Heart left ventricle (tissue), 16 donors: ENCODE measurements at regions of chr17 and their contacts with region 1.

Region 1: GRCh38 chr17:29760761-29761696 is 138.3 kb upstream of the CORO6 start:
- DNase-seq: peak; percentile 92 to 97 (median 94)
- ATAC-seq: peak; percentile 95 to 99 (median 98)
- H3K4me3 ChIP-seq: peak overlapping the region; percentile 62 to 95 (median 89)
- H3K27ac ChIP-seq: peak overlapping the region; percentile 48 to 97 (median 90)
- H3K4me1 ChIP-seq: peaks cover 0 to 42% (median 22%) of the 10 kb centered on the region in 12 donors
- H3K27me3 ChIP-seq: no peaks in the 10 kb centered on the region
- CTCF ChIP-seq: peak in 2 of 12 donors; percentile 6 to 26
- POLR2A ChIP-seq: peak; percentile 33 to 89

Region 2: DNA sequence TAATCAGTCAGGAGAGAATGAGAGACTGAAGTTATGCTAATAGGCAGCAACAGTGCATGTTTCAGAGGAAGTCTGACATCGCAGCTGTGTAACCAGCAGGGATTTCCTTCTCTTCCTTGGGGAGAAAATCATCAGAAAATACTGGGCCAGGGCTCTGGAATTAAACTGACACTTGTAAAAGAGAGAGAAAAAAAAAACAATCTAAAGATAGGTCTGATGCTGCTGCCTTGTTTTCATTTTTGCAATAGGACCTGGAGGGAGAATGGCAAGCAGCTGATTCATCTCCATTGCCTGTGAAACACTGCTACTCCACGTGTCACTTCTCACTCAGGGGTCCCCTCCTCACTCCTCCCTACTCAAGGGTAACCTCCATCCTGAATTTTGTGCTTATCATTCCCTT is 120.6 kb before region 1 on chr17:
- intact Hi-C with region 1: loop called in 8 of 10 experiments (anchors 1 to 5 kb)
- DNase-seq: no peak
- ATAC-seq: peak in 3 of 4 donors; percentile 6 to 30 (median 15)
- H3K4me3 ChIP-seq: no peak overlapping the region
- H3K27ac ChIP-seq: peak overlapping the region; percentile 60 to 83 (median 76)
- H3K4me1 ChIP-seq: peaks cover 11 to 69% (median 66%) of the 10 kb centered on the region in 12 donors
- H3K27me3 ChIP-seq: no peaks in the 10 kb centered on the region
- CTCF ChIP-seq: no peak
- POLR2A ChIP-seq: no peak

Region 3: GRCh38 chr17:29682054-29682453 is 79.0 kb before region 1 on chr17:
- intact Hi-C with region 1: loop called in 4 of 10 experiments (anchors 5 to 10 kb)
- DNase-seq: no peak
- ATAC-seq: peak in 3 of 4 donors; percentile 35 to 57 (median 44)
- H3K4me3 ChIP-seq: no peak overlapping the region
- H3K27ac ChIP-seq: peak overlapping the region; percentile 36 to 87 (median 65)
- H3K4me1 ChIP-seq: peaks cover 0 to 71% (median 41%) of the 10 kb centered on the region in 12 donors
- H3K27me3 ChIP-seq: no peaks in the 10 kb centered on the region
- CTCF ChIP-seq: peak in 2 of 12 donors; percentile 18 to 19
- POLR2A ChIP-seq: no peak

Region 4: DNA sequence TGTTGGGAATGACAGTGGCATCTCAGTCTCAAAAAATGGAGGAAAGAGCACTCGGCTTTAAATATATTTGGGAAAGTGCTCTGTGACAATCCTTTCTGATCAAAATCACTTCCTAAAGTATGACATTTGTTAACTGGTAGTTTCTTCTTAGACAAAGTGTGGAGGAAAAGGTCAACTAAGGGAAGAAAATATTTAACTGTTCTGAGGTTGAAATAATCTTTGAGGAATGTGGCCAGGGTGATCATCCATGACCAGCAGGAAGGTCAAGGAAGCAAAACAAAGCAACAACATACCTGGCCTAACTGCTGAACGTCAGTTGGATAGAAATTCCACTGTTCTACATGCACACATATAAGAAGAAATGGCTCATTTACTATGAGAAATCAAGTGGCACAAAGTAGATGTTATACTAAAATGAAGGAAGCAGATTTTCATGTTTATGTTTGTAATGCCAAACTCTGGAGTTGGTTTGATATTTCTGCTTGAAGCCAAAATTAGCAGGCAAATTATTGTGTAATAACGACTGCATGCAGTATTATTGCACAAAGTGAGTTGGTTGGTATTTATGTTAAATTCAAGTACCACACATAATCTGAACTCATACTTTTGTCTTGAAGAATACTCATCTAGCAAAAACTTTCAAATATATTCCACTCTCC is 51.0 kb before region 1 on chr17:
- intact Hi-C with region 1: loop called in 1 of 10 experiments (anchors 5 kb)
- DNase-seq: no peak
- ATAC-seq: no peak
- H3K4me3 ChIP-seq: no peak overlapping the region
- H3K27ac ChIP-seq: peak overlapping the region in 9 of 12 donors; percentile 2 to 98 (median 29)
- H3K4me1 ChIP-seq: peaks cover under 1 to 95% (median 53%) of the 10 kb centered on the region in 12 donors
- H3K27me3 ChIP-seq: no peaks in the 10 kb centered on the region
- CTCF ChIP-seq: no peak
- POLR2A ChIP-seq: no peak

Region 5: DNA sequence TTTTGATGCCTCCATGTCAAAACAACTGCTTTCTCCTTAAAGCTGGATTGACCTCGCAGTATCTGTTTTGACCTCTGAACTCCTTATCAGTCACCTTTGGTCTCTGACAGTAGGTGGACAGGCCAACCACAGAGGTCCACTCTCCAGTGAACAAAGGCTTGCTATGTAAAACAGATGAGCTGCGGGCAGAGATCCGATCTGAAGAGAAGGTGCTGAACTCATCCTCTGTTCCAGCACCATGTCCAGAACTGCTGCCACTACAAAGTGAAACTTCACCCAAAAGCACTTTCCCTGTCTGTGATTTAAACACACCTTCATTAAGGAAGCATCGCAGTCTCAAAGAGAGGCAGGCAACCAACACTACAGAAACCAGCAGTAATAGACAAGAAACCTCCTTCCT is 21.0 kb before region 1 on chr17:
- intact Hi-C with region 1: loop called in 1 of 10 experiments (anchors 2 kb)
- DNase-seq: no peak
- ATAC-seq: peak in 1 of 4 donors; percentile 2
- H3K4me3 ChIP-seq: no peak overlapping the region
- H3K27ac ChIP-seq: peak overlapping the region in 11 of 12 donors; percentile 1 to 71 (median 48)
- H3K4me1 ChIP-seq: peaks cover 0 to 59% (median 47%) of the 10 kb centered on the region in 12 donors
- H3K27me3 ChIP-seq: no peaks in the 10 kb centered on the region
- CTCF ChIP-seq: no peak
- POLR2A ChIP-seq: no peak

Region 6: GRCh38 chr17:29825604-29826003 is 64.6 kb after region 1 on chr17:
- intact Hi-C with region 1: no loop called
- DNase-seq: no peak
- ATAC-seq: no peak
- H3K4me3 ChIP-seq: no peak overlapping the region
- H3K27ac ChIP-seq: no peak overlapping the region
- H3K4me1 ChIP-seq: peaks cover 0 to 4% (median 0%) of the 10 kb centered on the region in 12 donors
- H3K27me3 ChIP-seq: no peaks in the 10 kb centered on the region
- CTCF ChIP-seq: no peak
- POLR2A ChIP-seq: no peak